ENCODE measurements at regions of chr14 and their contacts with region 1.

Region 1: GRCh38 chr14:80996049-80996901 is 40.9 kb downstream of the TSHR start:
- DNase-seq: peak; percentile 93
- H3K4me3 ChIP-seq: no peak overlapping the region
- H3K27ac ChIP-seq: no peak overlapping the region
- H3K4me1 ChIP-seq: no peaks in the 10 kb centered on the region
- H3K27me3 ChIP-seq: no peaks in the 10 kb centered on the region; the same call in 1 of the 2 replicates

Region 2: GRCh38 chr14:81164167-81164774 is 168.0 kb after region 1 on chr14:
- in situ Hi-C with region 1: loop called (anchors 10 kb)
- DNase-seq: peak; percentile 75
- H3K4me3 ChIP-seq: no peak overlapping the region
- H3K27ac ChIP-seq: no peak overlapping the region
- H3K4me1 ChIP-seq: peaks cover under 1% of the 10 kb centered on the region; the same call in 1 of the 2 replicates
- H3K27me3 ChIP-seq: no peaks in the 10 kb centered on the region

Region 3: DNA sequence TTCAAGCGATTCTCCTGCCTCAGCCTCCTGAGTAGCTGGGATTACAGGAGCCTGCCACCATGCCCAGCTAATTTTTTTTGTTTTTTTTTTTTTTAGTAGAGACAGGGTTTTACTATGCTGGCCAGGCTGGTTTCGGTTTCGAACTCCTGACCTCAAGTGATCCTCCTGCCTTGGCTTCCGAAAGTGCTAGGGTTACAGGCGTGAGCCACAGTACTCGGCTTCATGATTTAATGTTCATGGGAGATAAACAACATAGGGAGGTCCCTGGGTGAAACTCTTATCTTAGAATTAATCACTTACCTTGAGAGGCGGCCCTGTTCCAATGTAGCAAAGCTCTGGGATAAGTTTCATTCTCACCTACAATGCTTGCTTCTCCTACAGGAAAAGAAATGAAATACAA is 489.1 kb after region 1 on chr14:
- in situ Hi-C with region 1: no loop called
- DNase-seq: no peak
- H3K4me3 ChIP-seq: no peak overlapping the region
- H3K27ac ChIP-seq: no peak overlapping the region
- H3K4me1 ChIP-seq: no peaks in the 10 kb centered on the region
- H3K27me3 ChIP-seq: no peaks in the 10 kb centered on the region

Measured in GM23248 (cell line).